Astrocyte of the cerebellum (primary cell): ENCODE measurements at regions of chrX and their contacts with region 1.

Region 1: GRCh38 chrX:97252111-97252510 is 368.4 kb downstream of the RPA4 start:
- DNase-seq: no peak
- H3K4me3 ChIP-seq: no peak overlapping the region
- CTCF ChIP-seq: no peak

Region 2: GRCh38 chrX:97168627-97169026 is 83.5 kb before region 1 on chrX:
- in situ Hi-C with region 1: no loop called
- DNase-seq: no peak
- H3K4me3 ChIP-seq: no peak overlapping the region
- CTCF ChIP-seq: no peak

Region 3: DNA sequence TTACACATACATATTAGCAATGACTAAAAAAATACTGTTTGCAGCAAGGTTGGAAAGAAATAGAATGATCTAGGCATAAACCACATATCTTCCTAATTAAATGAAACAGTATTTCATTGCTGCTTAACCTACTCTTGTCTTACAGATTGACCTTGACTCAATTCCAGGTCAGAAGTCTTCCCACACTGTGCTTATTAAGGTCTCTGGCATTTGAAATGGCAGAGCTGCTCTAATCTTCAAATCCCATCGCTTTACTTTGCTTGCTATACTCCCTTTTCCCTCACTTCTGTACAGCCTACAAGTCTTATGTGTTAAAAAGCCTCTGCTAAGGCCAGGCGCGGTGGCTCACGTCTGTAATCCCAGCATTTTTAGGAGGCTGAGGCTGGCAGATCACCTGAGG is 56.1 kb after region 1 on chrX:
- in situ Hi-C with region 1: loop called (anchors 5 kb)
- DNase-seq: no peak
- H3K4me3 ChIP-seq: no peak overlapping the region
- CTCF ChIP-seq: no peak